ENCODE measurements at regions of chr3 and their contacts with region 1.

Region 1: GRCh38 chr3:13548696-13549622 is at the start of gene FBLN2:
- DNase-seq: no peak
- H3K4me3 Mint-ChIP-seq: peak within 1 kb of the TSS; percentile 36
- H3K27ac Mint-ChIP-seq: no peak within 1 kb of the TSS
- H3K4me1 Mint-ChIP-seq: peaks cover 25% of the 10 kb centered on the region
- H3K27me3 Mint-ChIP-seq: peaks cover 37% of the 10 kb centered on the region
- total RNA-seq, gene FBLN2: not detected

Region 2: GRCh38 chr3:13346481-13347389 is 202.2 kb before region 1 on chr3:
- CTCF ChIA-PET with region 1: no interaction called
- intact Hi-C with region 1: no loop called
- DNase-seq: peak; percentile 93
- H3K4me3 Mint-ChIP-seq: no peak overlapping the region
- H3K27ac Mint-ChIP-seq: peak overlapping the region; percentile 81
- H3K4me1 Mint-ChIP-seq: peaks cover 56% of the 10 kb centered on the region
- H3K27me3 Mint-ChIP-seq: no peaks in the 10 kb centered on the region

Region 3: DNA sequence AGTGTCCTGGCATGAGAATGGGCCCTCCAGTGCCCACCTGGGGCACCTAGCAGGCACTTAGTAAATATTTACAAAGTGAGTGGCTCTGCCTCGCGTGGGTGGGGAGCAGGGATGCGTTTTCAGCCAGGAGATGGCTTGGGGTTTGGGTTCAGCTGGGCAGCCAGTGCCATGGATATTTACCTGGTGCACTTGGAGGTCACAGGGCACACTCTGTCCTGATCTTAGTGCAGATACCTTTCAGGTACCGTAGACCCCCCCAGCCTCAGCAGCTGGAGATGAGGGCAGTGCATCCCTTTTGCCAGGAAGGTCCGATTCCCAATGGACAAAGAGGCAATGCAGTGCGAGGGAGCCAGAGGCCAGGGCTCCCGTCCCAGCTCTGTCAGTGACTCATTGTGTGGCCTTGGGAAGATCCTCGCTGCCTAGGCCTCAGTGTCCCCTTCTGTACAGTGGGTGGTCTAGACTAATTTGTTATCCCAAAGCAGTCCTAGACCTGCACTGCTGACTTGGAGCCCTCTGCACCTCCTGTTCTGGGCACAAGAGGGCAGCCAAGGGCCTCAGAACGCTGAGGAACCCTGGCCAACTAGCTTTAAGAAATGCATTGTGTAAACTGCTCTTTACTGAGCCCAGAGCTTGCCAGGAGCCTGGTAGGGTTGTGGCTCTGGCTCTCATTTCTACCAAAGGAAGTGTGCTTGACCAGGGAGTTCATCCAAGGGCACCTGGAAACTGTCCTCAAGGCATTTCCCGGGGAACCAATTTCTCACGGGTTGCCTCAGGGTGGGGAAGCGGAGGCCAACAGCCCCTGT is 52.8 kb before region 1 on chr3:
- CTCF ChIA-PET with region 1: interaction called, 6 read pairs
- intact Hi-C with region 1: loop called (anchors 5 kb)
- DNase-seq: peak; percentile 83
- H3K4me3 Mint-ChIP-seq: no peak overlapping the region
- H3K27ac Mint-ChIP-seq: no peak overlapping the region
- H3K4me1 Mint-ChIP-seq: no peaks in the 10 kb centered on the region
- H3K27me3 Mint-ChIP-seq: no peaks in the 10 kb centered on the region

Measured in activated naive CD4-positive, alpha-beta T cell treated with anti-CD3 and anti-CD28 coated beads for 36 hours (primary cell).